ENCODE measurements at regions of chr17 and their contacts with region 1.

Region 1: GRCh38 chr17:56715613-56716357 is 117.9 kb downstream of the C17orf67 start:
- DNase-seq: peak; percentile 90
- ATAC-seq: peak; percentile 99
- H3K4me3 Mint-ChIP-seq: no peak overlapping the region
- H3K27ac Mint-ChIP-seq: no peak overlapping the region
- H3K4me1 Mint-ChIP-seq: no peaks in the 10 kb centered on the region
- H3K27me3 Mint-ChIP-seq: no peaks in the 10 kb centered on the region
- CTCF ChIP-seq: peak; percentile 83

Region 2: GRCh38 chr17:56510554-56511342 is 205.0 kb before region 1 on chr17:
- CTCF ChIA-PET with region 1: interaction called, 10 read pairs
- POLR2A ChIA-PET with region 1: no interaction called
- intact Hi-C with region 1: no loop called
- DNase-seq: no peak
- ATAC-seq: no peak
- H3K4me3 Mint-ChIP-seq: no peak overlapping the region
- H3K27ac Mint-ChIP-seq: no peak overlapping the region
- H3K4me1 Mint-ChIP-seq: no peaks in the 10 kb centered on the region
- H3K27me3 Mint-ChIP-seq: peaks cover 2% of the 10 kb centered on the region
- CTCF ChIP-seq: no peak

Region 3: DNA sequence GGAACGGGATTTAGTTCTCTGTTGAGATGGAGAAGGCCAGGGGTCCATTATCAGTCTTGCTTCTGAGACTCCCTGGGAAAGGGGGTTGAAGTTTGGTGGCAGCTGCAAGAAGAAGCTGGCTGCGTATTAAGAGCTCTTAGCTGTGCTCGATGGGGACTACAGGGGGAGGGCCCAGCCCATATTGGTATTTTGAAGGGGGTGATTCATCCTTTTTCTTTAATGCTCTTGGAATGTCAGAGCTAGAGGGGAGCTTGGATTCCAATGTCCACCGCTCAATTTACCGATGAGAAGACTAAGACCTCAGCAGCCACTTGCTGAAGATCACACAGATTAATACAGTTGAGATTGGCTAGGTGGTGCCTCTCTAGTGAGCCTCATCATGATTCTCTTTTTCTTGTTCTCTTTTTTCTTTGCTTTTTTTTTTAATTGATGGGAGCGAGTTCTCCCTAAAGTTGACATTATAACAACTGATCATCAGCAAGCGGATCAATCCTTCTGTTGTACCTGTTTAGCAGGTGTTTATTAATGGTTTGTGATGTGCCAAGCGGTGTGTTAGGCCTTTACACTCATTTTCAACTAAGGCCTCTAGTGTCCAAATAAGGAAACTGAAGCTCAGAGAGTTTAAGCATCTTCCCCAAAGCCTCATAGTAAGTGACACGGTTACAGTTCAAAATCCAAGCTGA is 117.2 kb before region 1 on chr17:
- CTCF ChIA-PET with region 1: interaction called, 106 read pairs
- POLR2A ChIA-PET with region 1: interaction called, 9 read pairs
- intact Hi-C with region 1: loop called (anchors 2 kb)
- DNase-seq: no peak
- ATAC-seq: peak; percentile 24
- H3K4me3 Mint-ChIP-seq: peak overlapping the region; percentile 82
- H3K27ac Mint-ChIP-seq: peak overlapping the region; percentile 84
- H3K4me1 Mint-ChIP-seq: peaks cover 63% of the 10 kb centered on the region
- H3K27me3 Mint-ChIP-seq: peaks cover 12% of the 10 kb centered on the region
- CTCF ChIP-seq: peak; percentile 16

Region 4: DNA sequence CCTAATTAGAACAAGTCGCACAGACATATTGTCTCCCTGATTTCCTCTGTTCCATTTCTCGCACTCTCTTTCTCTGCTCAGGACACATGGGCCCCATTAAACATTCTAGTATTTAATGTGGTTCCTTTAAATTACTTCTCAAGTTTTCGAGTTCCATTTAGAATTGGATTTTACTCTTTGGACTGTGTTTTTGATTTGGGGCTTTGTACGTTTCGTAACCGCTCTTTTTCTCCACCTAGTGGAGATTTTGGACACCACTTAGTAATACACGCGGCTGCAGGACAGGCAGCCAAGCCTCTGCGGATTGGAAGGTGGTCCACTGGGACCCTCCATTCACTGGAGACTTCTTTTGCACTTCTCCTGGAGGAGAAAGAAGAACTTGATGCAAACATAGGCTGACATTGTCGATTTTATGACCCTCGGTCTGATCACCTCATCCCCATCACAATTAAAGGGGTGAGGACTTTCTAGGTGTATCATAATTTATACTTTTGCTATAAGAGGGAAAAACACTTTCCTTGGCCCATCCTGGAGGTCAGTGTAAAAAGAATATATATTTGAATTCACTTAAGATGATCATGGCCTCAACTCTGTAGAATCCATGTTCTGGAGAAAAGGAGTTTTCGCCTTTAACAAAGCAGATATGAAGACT is 36.5 kb before region 1 on chr17:
- CTCF ChIA-PET with region 1: interaction called, 23 read pairs
- POLR2A ChIA-PET with region 1: no interaction called
- intact Hi-C with region 1: no loop called
- DNase-seq: peak; percentile 20
- ATAC-seq: peak; percentile 24
- H3K4me3 Mint-ChIP-seq: peak overlapping the region; percentile 56
- H3K27ac Mint-ChIP-seq: no peak overlapping the region
- H3K4me1 Mint-ChIP-seq: peaks cover 22% of the 10 kb centered on the region
- H3K27me3 Mint-ChIP-seq: peaks cover 38% of the 10 kb centered on the region
- CTCF ChIP-seq: peak; percentile 73

Region 5: GRCh38 chr17:56762988-56763387 is 47.2 kb after region 1 on chr17:
- CTCF ChIA-PET with region 1: interaction called, 10 read pairs
- POLR2A ChIA-PET with region 1: no interaction called
- intact Hi-C with region 1: no loop called
- DNase-seq: no peak
- ATAC-seq: peak; percentile 88
- H3K4me3 Mint-ChIP-seq: no peak overlapping the region
- H3K27ac Mint-ChIP-seq: peak overlapping the region; percentile 50
- H3K4me1 Mint-ChIP-seq: peaks cover 19% of the 10 kb centered on the region
- H3K27me3 Mint-ChIP-seq: no peaks in the 10 kb centered on the region
- CTCF ChIP-seq: no peak